ENCODE measurements at regions of chr16 and their contacts with region 1.

Region 1: DNA sequence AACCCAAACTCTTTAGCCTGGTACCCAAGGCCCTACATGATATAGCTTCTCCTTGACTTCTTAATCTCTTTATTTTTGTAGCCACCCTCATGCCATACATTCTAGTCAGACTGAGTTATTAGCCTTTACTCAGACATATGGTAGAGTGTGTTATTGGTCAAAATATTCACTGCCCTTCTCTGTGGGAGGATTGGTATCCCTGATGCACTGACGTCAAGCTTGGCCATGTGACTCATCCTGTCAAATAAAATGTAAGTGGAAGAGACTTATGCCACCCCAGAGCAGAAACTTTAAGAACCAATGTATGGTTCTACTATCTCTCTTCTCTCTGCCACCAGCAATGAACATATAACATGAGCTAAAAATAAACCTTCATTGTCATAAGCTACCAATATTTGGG is 12.2 kb upstream of the BEAN1 start:
- DNase-seq: no peak
- H3K4me3 ChIP-seq: no peak overlapping the region
- H3K4me1 ChIP-seq: no peaks in the 10 kb centered on the region
- H3K27me3 ChIP-seq: no peaks in the 10 kb centered on the region

Region 2: GRCh38 chr16:66478733-66479511 is 64.0 kb after region 1 on chr16:
- in situ Hi-C with region 1: loop called (anchors 5 kb)
- DNase-seq: peak; percentile 64 to 83
- H3K4me3 ChIP-seq: no peak overlapping the region
- H3K4me1 ChIP-seq: no peaks in the 10 kb centered on the region
- H3K27me3 ChIP-seq: peaks cover 13% of the 10 kb centered on the region

Region 3: DNA sequence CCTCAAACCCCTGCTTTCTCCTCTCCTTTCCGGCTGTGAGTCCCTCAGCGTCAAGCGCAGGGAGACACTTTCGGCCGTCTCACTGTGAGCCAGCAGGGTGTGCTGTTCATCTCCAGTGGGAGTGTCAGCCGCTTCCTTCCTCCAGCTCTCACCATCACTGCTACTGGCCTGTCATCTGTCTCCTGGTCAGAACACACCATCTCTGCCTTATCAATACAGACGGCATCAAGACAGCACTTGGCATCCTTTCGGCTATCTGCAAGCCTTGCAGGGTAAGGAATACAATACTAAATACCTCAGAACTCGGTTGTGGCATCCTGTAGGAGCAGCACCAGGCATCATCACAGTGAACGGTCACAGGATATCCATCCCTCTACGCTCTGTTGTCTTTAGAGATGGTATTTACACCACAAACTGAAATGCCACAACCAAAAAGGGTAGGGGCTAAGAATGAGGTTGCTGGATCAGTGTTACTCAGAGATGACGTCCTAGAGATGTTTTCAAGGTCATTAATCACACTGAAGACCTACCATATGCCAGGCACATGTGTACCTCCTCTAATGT is 302.3 kb after region 1 on chr16:
- in situ Hi-C with region 1: no loop called
- DNase-seq: peak; percentile 29 to 64
- H3K4me3 ChIP-seq: no peak overlapping the region
- H3K4me1 ChIP-seq: no peaks in the 10 kb centered on the region
- H3K27me3 ChIP-seq: no peaks in the 10 kb centered on the region